PC-3 (cell line): ENCODE measurements at regions of chr13 and their contacts with region 1.

Region 1: DNA sequence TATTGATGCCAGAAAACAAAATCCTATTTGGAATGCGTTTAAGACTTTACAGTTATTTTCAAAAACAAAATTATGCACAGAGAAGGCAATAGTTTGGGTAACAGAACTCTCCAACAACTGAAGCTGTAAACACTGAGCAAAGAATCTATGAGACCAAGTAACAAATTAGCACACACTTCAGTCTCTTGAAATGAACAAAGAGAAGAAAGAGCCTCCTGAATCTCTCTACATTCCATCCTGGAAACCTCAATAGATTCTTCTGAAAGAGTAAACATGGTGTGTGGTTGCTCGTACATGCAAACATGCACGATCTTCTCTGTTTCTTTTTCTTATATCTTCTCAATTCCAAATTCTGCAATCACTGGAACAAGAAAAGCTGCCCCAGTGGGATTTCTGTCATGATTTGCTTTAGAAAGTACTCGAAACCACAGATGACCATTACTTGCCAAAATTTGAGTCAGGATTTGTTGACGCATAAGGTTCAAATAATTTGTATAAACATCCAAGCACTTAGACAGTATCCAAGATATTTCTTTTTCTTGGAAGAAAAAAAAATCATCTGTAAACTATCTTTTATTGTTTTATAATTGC is 137.9 kb upstream of the DACH1 start:
- DNase-seq: peak; percentile 71
- ATAC-seq: peak; percentile 65
- H3K4me3 ChIP-seq: peak overlapping the region; percentile 14; the same call in 1 of the 2 replicates
- H3K27ac ChIP-seq: peak overlapping the region; percentile 49
- H3K4me1 ChIP-seq: peaks cover 15% of the 10 kb centered on the region
- H3K27me3 ChIP-seq: no peaks in the 10 kb centered on the region
- CTCF ChIP-seq: no peak

Region 2: GRCh38 chr13:72125561-72125960 is 120.7 kb after region 1 on chr13:
- CTCF ChIA-PET with region 1: no interaction called
- POLR2A ChIA-PET with region 1: no interaction called
- intact Hi-C with region 1: loop called (anchors 2 kb)
- DNase-seq: peak; percentile 66
- ATAC-seq: no peak
- H3K4me3 ChIP-seq: no peak overlapping the region
- H3K27ac ChIP-seq: peak overlapping the region; percentile 92
- H3K4me1 ChIP-seq: peaks cover 29% of the 10 kb centered on the region
- H3K27me3 ChIP-seq: no peaks in the 10 kb centered on the region
- CTCF ChIP-seq: no peak